AG04449 (cell line): ENCODE measurements at regions of chr6 and their contacts with region 1.

Region 1: DNA sequence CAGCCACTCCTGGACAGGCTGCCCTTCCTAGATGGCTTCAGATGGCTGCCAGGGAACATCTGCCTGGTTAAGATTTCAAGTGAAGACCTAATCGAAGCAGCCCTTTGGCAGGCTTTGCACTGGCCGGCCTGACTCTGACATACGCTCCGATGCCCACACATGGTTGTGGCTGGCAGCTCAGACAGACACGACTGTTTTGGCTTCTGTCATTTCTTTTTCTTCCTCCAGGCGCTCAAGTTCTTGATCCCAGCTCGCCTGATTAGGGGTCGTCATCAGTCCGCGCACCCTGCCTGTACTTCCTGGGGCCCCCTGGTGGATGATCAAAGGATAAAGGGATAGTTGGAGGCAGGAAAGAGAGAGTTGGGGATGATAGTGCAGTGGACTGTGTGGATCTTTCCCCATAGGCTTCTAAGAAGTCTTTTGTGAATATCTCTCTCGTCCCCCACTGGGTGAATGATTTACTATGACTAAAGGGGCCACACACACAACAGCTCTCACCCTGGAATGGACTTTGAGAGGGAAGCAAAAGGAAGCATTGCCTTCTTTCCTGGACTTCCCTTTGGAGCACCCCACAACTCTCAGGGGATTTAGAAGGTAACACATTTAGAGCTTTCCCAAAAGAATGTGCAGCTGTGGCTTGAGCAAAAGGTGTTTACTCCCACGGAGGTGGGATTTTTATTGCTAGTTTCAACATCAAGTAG is 21.4 kb upstream of the TRAM2 start:
- DNase-seq: no peak
- H3K4me3 ChIP-seq: no peak overlapping the region
- CTCF ChIP-seq: peak; percentile 82

Region 2: DNA sequence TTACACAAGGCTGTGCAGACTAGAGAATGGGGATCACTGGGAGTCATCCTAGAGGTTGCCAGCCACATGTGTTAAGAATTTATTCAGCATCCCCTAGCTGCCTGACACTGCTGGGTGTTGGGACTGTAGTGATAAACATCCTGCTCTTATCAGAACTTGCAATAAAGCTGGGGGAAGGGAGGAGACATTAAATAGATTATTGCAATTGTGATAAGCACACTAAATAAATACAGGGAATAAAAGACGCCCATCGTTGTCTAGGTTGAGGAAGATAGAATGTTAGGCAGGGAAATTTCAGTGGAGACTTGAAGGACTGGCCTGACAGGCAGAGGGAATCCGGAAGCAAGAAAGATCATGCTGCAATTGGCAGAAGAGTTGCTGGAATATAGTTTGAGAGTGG is 11.7 kb after region 1 on chr6:
- CTCF ChIA-PET with region 1: interaction called, 79 read pairs
- POLR2A ChIA-PET with region 1: interaction called, 5 read pairs
- DNase-seq: no peak
- H3K4me3 ChIP-seq: no peak overlapping the region
- CTCF ChIP-seq: no peak

Region 3: GRCh38 chr6:52635049-52635577 is 36.8 kb after region 1 on chr6:
- CTCF ChIA-PET with region 1: interaction called, 14 read pairs
- POLR2A ChIA-PET with region 1: interaction called, 4 read pairs
- DNase-seq: no peak
- H3K4me3 ChIP-seq: no peak overlapping the region
- CTCF ChIP-seq: no peak

Region 4: DNA sequence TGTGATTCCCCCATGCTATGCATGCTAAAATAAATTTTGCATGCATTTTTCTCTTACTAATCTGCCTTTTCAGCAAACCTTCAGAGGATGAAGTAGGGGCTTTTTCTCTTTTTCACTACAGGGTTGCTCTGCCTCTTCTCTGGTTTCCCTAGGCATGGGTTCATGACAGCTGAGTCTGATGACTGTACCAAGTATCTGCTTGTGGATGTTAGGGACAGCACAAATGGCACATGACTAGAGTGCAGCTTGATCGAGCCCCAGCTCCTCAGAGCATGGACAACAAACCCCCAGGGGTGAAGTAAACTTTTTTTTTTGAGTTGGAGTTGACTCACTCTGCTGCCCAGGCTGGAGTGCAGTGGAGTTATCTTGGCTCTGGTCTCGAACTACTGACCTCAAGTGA is 607.5 kb after region 1 on chr6:
- CTCF ChIA-PET with region 1: no interaction called
- POLR2A ChIA-PET with region 1: no interaction called
- DNase-seq: no peak
- H3K4me3 ChIP-seq: no peak overlapping the region
- CTCF ChIP-seq: no peak